Heart right ventricle (tissue), 16 donors: ENCODE measurements at regions of chr1 and their contacts with region 1.

Region 1: GRCh38 chr1:213015099-213016050 is at the start of gene ANGEL2:
- DNase-seq: peak; percentile 96 to 97
- ATAC-seq: peak; percentile 97 to 99 (median 99)
- H3K4me3 ChIP-seq: peak within 1 kb of the TSS; percentile 72 to 96 (median 88)
- H3K27ac ChIP-seq: peak within 1 kb of the TSS; percentile 84 to 96 (median 94)
- H3K4me1 ChIP-seq: peaks cover 0 to 22% (median 17%) of the 10 kb centered on the region in 9 donors
- H3K27me3 ChIP-seq: no peaks in the 10 kb centered on the region
- CTCF ChIP-seq: no peak
- total RNA-seq, gene ANGEL2: 13.8 to 22.0 (median 18.6) TPM

Region 2: DNA sequence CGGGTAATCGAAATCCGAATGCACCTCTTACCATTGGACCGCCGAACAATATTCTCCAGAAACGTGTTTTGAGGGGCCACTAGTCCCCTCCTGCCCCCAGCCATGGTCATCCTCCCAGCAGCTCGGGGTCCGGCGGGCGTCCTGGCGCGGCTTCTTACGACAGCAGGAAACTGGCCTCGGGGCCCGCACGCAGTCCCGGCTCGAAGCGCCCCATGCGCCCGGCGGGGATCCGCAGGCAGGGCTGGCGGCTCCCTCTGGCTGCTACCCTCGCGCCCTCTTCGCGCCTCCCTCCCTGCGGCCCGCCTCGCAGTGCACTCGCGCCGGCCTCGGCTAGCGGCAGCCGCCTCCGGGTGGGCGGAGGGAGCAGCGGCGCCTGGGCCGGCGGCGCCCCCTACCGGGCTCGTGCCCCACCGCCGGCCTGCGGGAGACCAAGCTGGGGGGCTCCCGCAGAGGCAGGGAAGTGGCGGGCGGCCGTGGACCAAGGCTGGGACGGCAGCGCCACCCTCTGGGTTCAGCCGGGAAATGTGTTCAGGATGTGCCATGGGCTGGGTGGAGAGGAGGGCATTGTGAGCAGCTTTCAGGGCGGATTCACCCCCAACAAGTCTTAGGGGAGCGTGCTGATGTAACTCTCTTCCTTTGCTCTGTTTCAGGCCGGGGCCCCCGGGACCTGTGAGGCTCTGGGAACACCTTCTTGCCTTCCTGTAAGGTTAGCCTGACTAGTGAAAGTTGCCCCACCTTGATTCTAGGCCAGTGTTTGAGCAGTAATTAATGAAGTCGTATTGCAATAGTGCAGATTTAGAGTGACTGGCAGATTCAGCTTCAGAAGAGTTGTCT is 1881.3 kb before region 1 on chr1 and contains the start of gene KCNH1:
- intact Hi-C with region 1: no loop called
- DNase-seq: peak; percentile 51 to 78
- ATAC-seq: peak; percentile 91 to 98 (median 94)
- H3K4me3 ChIP-seq: peak within 1 kb of the TSS in 9 of 10 donors; percentile 29 to 49 (median 47)
- H3K27ac ChIP-seq: no peak within 1 kb of the TSS
- H3K4me1 ChIP-seq: peaks cover 3 to 18% (median 13%) of the 10 kb centered on the region in 9 donors
- H3K27me3 ChIP-seq: peaks cover 0 to 90% (median 72%) of the 10 kb centered on the region in 7 donors
- CTCF ChIP-seq: peak; percentile 76 to 95 (median 89)
- total RNA-seq, gene KCNH1: 0.09 TPM in 1 of 10 donors, not detected in the others

Region 3: GRCh38 chr1:213051127-213051880 is 35.9 kb after region 1 on chr1 and contains the start of gene RPS6KC1:
- intact Hi-C with region 1: loop called in 1 of 10 experiments (anchors 2 kb)
- DNase-seq: peak; percentile 85
- ATAC-seq: peak; percentile 98 to 100 (median 99)
- H3K4me3 ChIP-seq: peak within 1 kb of the TSS; percentile 73 to 99 (median 94)
- H3K27ac ChIP-seq: peak within 1 kb of the TSS; percentile 1 to 94 (median 78)
- H3K4me1 ChIP-seq: peaks cover 2 to 25% (median 17%) of the 10 kb centered on the region in 9 donors
- H3K27me3 ChIP-seq: peaks cover 0 to 29% (median 21%) of the 10 kb centered on the region in 7 donors
- CTCF ChIP-seq: peak in 2 of 9 donors; percentile 18 to 24
- total RNA-seq, gene RPS6KC1: 9.1 to 13.8 (median 10.4) TPM

Region 4: GRCh38 chr1:213122514-213122929 is 107.1 kb after region 1 on chr1:
- intact Hi-C with region 1: no loop called
- DNase-seq: no peak
- ATAC-seq: no peak
- H3K4me3 ChIP-seq: no peak overlapping the region
- H3K27ac ChIP-seq: no peak overlapping the region
- H3K4me1 ChIP-seq: peaks cover 0 to 13% (median 6%) of the 10 kb centered on the region in 9 donors
- H3K27me3 ChIP-seq: no peaks in the 10 kb centered on the region
- CTCF ChIP-seq: peak; percentile 36 to 74 (median 63)